ENCODE measurements at regions of chr2 and their contacts with region 1.

Region 1: DNA sequence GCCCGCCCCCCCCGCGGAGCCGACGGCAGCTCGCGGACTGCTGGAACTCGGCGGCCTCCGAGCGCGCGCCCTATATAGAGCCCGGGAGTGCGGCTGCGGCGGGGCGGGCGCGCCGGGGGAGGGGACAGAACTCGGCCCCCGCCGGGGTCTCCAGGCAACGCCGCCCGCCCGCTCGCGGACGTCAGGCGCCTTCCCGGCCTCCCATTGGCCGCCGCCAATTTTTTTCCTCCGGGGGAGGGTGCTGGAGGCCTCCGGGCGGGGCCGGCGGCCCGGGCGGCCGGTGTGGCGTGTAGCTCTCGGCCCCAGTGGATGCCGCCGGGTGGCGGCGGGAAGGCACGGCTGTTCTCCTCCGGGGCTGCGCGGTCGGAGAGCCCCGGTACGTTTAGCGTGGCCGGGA is at the start of gene ZFP36L2:
- DNase-seq: peak; percentile 96
- H3K4me3 Mint-ChIP-seq: peak within 1 kb of the TSS; percentile 94
- H3K27ac Mint-ChIP-seq: peak within 1 kb of the TSS; percentile 96
- H3K4me1 Mint-ChIP-seq: peaks cover 32% of the 10 kb centered on the region
- H3K27me3 Mint-ChIP-seq: no peaks in the 10 kb centered on the region
- total RNA-seq, gene ZFP36L2: 78.4 to 79.8 TPM

Region 2: GRCh38 chr2:42828487-42829425 is 397.8 kb before region 1 on chr2:
- CTCF ChIA-PET with region 1: interaction called, 6 read pairs
- POLR2A ChIA-PET with region 1: no interaction called
- intact Hi-C with region 1: loop called (anchors 2 kb)
- DNase-seq: peak; percentile 78
- H3K4me3 Mint-ChIP-seq: no peak overlapping the region
- H3K27ac Mint-ChIP-seq: no peak overlapping the region
- H3K4me1 Mint-ChIP-seq: peaks cover 14% of the 10 kb centered on the region
- H3K27me3 Mint-ChIP-seq: peaks cover 2% of the 10 kb centered on the region

Region 3: DNA sequence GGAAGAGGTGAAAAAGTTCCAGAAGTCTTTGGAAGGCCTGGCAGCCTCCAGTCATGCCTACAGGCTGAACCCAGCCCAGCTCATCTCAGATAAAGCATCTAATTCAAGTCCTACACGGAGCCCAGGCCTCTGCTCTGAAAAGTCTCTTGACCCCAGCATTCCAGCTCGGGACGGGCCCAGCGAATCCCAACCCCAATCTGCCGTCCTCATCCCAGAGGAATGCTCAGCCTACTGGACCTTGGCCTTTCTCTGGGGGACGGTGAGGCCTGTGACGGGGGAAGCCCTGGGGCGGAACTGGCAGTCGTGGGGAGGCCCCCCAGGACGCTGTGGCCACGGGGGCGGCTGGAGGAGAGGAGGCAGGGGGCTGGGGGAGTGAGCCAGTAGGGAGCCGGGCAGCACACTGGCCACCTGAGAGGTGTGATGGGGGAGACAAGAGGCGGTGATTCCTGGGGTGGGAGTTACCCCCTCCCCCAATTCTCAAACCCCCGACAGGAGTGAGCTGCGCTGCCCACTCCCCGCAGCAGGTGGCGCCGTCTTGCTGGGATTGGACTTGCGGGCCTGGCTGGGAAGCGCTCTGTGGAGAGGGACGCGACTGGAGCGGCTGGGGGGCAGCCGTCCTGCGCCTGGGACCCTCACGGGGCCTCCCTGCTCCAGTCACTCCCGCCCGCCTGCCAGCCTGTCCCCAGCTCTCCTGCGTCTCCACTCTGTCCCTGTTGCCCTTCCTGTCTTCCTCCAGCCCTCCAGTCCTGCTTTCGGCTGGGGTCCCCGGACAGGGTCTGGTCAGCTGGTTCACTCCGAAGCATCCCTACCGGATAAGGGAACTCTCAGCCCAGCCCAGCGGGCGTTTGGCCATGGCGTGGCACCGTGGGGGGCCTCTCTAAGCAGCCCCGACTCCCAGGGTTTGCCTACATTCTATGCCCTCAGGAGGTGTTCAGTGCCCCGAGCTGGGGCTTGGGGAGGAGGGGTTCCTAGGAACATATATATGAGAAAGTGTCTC is 251.5 kb before region 1 on chr2:
- CTCF ChIA-PET with region 1: interaction called, 52 read pairs
- POLR2A ChIA-PET with region 1: interaction called, 4 read pairs
- intact Hi-C with region 1: loop called (anchors 1 kb)
- DNase-seq: peak; percentile 61
- H3K4me3 Mint-ChIP-seq: no peak overlapping the region
- H3K27ac Mint-ChIP-seq: no peak overlapping the region
- H3K4me1 Mint-ChIP-seq: peaks cover 13% of the 10 kb centered on the region
- H3K27me3 Mint-ChIP-seq: no peaks in the 10 kb centered on the region

Region 4: DNA sequence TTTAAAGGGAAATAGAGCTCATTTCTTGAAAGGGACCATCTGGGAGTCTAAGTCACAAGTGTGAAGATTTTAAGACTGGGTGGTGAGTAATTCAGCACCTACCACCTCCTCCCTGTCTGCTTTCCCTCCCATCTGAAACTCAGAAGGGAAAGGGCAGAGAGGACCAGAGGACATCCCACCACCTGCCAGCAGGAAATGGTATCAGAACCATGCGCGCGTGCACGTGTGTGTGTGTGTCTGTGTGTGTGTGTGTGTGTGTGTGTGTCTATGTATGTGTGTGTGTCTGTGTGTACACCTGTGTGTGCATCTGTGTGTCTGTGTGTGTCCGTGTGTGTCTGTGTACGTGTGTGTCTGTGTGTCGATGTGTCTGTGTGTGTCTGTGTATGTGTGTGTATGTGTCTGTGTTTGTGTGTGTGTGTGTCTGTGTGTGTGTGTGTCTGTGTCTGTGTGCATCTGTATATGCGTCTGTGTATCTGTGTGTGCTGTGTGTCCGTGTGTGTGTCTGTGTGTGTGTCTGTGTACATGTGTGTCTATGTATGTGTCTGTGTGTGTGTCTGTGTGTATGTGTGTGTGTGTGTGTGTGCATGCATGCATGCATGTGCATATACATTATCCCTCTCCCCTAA is 77.0 kb before region 1 on chr2:
- CTCF ChIA-PET with region 1: interaction called, 13 read pairs
- POLR2A ChIA-PET with region 1: interaction called, 5 read pairs
- intact Hi-C with region 1: no loop called
- DNase-seq: peak; percentile 83
- H3K4me3 Mint-ChIP-seq: peak overlapping the region; percentile 9
- H3K27ac Mint-ChIP-seq: peak overlapping the region; percentile 82
- H3K4me1 Mint-ChIP-seq: peaks cover 59% of the 10 kb centered on the region
- H3K27me3 Mint-ChIP-seq: no peaks in the 10 kb centered on the region

Region 5: DNA sequence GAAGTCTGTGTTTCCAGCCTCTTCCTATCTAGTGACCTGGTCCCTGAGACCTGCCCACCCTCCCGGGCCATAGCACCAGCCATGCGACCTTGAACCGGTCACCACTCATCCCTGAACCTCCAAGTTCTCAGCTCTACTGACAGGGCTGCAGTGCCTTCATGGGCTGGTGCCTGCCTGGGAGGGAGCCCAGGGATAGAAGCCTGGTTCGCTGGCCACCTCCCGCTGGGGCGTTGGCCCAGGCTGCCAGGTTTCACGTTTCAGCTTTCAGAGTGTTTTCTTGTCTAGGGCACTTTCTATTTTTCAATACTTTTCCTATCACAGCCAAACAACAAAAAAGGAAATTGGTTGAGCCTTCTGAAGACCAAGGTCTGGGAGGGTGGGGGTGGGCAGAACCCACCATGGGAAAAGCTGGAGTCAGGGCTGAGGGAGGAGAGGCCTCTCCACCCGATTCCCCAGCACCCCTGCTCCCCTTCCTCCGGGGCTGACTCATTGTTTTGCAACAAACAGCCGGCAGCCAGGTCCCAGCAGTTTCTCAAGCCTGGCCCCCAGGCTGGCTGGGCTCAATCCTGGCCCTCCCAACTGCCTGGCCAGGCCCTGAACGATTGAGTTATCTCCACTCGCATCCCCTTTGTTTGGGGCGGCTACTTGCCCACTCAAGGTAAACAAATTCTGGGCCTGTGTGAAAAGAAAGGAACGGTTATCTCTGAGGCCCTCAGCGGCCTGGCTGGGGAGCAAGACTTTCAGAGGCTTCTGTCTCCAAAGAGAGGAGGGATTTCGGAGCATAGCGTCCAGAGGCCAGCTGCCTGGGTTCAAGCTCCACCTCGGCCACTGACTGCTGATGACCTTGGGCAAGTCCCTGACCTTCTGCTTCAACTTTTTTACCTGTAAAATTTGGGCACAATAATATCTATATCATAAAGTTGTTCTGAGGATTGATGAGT is 47.7 kb before region 1 on chr2:
- CTCF ChIA-PET with region 1: interaction called, 269 read pairs
- POLR2A ChIA-PET with region 1: interaction called, 215 read pairs
- intact Hi-C with region 1: loop called (anchors 1 kb)
- DNase-seq: peak; percentile 61
- H3K4me3 Mint-ChIP-seq: peak overlapping the region; percentile 29
- H3K27ac Mint-ChIP-seq: peak overlapping the region; percentile 87
- H3K4me1 Mint-ChIP-seq: peaks cover 69% of the 10 kb centered on the region
- H3K27me3 Mint-ChIP-seq: no peaks in the 10 kb centered on the region

Region 6: GRCh38 chr2:43438338-43438737 is 211.8 kb after region 1 on chr2:
- CTCF ChIA-PET with region 1: no interaction called
- POLR2A ChIA-PET with region 1: no interaction called
- intact Hi-C with region 1: no loop called
- DNase-seq: no peak
- H3K4me3 Mint-ChIP-seq: no peak overlapping the region
- H3K27ac Mint-ChIP-seq: no peak overlapping the region
- H3K4me1 Mint-ChIP-seq: peaks cover 2% of the 10 kb centered on the region
- H3K27me3 Mint-ChIP-seq: no peaks in the 10 kb centered on the region

Region 7: DNA sequence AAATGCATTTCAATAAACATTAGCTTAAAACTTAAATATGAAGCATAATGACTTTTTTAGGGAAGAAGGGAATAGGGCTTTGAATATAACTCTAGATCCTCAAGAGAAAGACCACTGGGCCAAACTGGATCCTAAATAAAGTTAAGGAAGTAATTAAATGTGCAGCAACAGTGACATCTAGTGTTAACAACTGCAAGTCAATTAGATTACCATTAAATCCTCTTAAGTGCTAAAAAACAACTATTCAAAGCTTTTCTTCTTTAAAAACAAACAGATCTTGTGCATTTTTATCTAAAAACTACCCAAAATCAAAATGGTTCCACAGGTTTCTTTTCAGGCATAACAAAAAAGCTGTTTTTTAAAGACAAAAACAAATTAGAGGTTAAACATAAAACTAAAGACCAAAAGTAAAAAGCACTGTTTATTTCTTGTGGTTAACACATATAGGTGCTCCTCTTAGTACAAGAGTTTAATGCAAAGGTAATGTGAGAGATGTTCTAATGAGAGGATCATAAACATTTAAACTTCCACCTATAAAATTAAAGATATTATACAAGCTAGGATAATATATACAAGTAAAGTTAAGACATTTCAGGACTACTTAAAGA is 257.9 kb after region 1 on chr2:
- CTCF ChIA-PET with region 1: interaction called, 61 read pairs
- POLR2A ChIA-PET with region 1: interaction called, 5 read pairs
- intact Hi-C with region 1: loop called (anchors 1 kb)
- DNase-seq: no peak
- H3K4me3 Mint-ChIP-seq: no peak overlapping the region
- H3K27ac Mint-ChIP-seq: no peak overlapping the region
- H3K4me1 Mint-ChIP-seq: peaks cover 10% of the 10 kb centered on the region
- H3K27me3 Mint-ChIP-seq: no peaks in the 10 kb centered on the region